ENCODE measurements at regions of chr1 and their contacts with region 1.

Region 1: DNA sequence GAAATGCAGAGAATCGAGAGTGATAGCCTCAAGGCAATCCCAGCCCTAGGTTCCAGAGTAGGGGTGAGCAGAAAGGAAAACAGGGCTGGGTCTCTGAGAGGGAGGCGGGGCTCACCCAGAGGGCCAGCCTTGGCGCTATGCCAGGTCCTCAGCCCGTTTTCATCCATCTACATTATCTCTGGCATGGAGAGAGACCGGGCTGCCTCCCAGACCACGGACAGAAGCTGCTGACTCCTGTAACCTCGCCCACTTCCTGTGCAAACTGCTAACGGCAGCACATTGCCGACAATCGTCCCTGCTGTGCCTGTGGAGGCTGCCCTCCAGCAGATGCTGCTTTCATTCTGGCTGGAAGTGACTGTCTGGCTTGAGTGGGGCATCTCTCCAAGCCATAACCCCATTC is 569.1 kb downstream of the NPHP4 start:
- DNase-seq: peak; percentile 51
- H3K4me3 Mint-ChIP-seq: no peak overlapping the region
- H3K27ac Mint-ChIP-seq: peak overlapping the region; percentile 63
- H3K4me1 Mint-ChIP-seq: peaks cover 42% of the 10 kb centered on the region
- H3K27me3 Mint-ChIP-seq: peaks cover 23% of the 10 kb centered on the region
- CTCF ChIP-seq: no peak

Region 2: DNA sequence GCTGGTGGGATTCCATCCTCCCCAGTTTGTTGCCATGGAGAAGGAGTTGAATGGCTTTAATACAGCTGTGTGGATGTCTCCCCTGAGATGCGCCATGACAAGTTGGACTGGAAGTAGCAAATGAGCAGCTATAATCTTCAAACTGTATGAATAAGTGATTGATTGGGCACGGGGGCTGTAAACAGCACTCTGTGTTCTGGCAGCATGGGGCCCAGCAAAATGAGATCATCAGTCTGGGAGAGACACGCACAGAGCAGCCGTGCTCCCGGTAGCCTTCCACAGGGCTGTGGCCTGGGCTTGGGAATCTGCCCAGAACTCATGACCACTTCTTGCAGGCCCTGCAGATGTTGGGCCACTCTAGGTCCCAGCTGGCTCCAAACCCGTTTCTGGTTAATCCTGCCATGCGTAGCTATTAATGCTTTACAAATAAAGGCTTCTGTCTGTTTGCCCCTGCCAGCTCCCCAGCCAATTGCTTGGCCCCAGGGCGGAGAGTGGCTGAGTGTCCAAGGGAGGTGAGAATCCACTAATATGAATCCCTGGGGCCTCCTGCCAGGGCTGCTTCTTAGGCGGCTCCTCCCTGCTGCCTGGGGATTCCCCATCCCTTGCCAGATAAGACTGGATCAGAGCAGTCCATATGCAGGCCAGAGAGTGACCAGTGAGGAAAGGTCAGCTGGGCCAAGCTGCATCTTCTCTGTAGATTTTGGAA is 125.8 kb before region 1 on chr1:
- CTCF ChIA-PET with region 1: no interaction called
- POLR2A ChIA-PET with region 1: no interaction called
- intact Hi-C with region 1: loop called (anchors 10 kb)
- DNase-seq: no peak
- H3K4me3 Mint-ChIP-seq: no peak overlapping the region
- H3K27ac Mint-ChIP-seq: no peak overlapping the region
- H3K4me1 Mint-ChIP-seq: peaks cover 23% of the 10 kb centered on the region
- H3K27me3 Mint-ChIP-seq: peaks cover 23% of the 10 kb centered on the region
- CTCF ChIP-seq: no peak

Region 3: GRCh38 chr1:5410647-5411046 is 12.5 kb before region 1 on chr1:
- CTCF ChIA-PET with region 1: interaction called, 4 read pairs
- POLR2A ChIA-PET with region 1: interaction called, 12 read pairs
- intact Hi-C with region 1: no loop called
- DNase-seq: peak; percentile 30
- H3K4me3 Mint-ChIP-seq: no peak overlapping the region
- H3K27ac Mint-ChIP-seq: no peak overlapping the region
- H3K4me1 Mint-ChIP-seq: peaks cover 4% of the 10 kb centered on the region
- H3K27me3 Mint-ChIP-seq: no peaks in the 10 kb centered on the region
- CTCF ChIP-seq: no peak

Region 4: GRCh38 chr1:5504354-5504720 is 81.2 kb after region 1 on chr1:
- CTCF ChIA-PET with region 1: interaction called, 4 read pairs
- POLR2A ChIA-PET with region 1: interaction called, 3 read pairs
- intact Hi-C with region 1: loop called (anchors 5 kb)
- DNase-seq: peak; percentile 16
- H3K4me3 Mint-ChIP-seq: peak overlapping the region; percentile 21
- H3K27ac Mint-ChIP-seq: peak overlapping the region; percentile 46
- H3K4me1 Mint-ChIP-seq: peaks cover 33% of the 10 kb centered on the region
- H3K27me3 Mint-ChIP-seq: peaks cover 3% of the 10 kb centered on the region
- CTCF ChIP-seq: no peak